ENCODE measurements at regions of chr3 and their contacts with region 1.

Region 1: GRCh38 chr3:12117473-12117872 is 41.2 kb downstream of the TIMP4 start:
- DNase-seq: no peak
- H3K4me3 ChIP-seq: no peak overlapping the region
- H3K27ac ChIP-seq: no peak overlapping the region
- H3K4me1 ChIP-seq: peaks cover 0 to 8% of the 10 kb centered on the region in 2 donors
- H3K27me3 ChIP-seq: no peaks in the 10 kb centered on the region
- CTCF ChIP-seq: no peak
- POLR2A ChIP-seq: no peak

Region 2: GRCh38 chr3:12630292-12630691 is 512.8 kb after region 1 on chr3:
- intact Hi-C with region 1: loop called (anchors 5 kb)
- DNase-seq: no peak
- H3K4me3 ChIP-seq: no peak overlapping the region
- H3K27ac ChIP-seq: no peak overlapping the region
- H3K4me1 ChIP-seq: no peaks in the 10 kb centered on the region
- H3K27me3 ChIP-seq: no peaks in the 10 kb centered on the region
- CTCF ChIP-seq: no peak
- POLR2A ChIP-seq: no peak

Measured in breast epithelium (tissue), 4 donors.